GM12878 (cell line): ENCODE measurements at regions of chr7 and their contacts with region 1.

Region 1: DNA sequence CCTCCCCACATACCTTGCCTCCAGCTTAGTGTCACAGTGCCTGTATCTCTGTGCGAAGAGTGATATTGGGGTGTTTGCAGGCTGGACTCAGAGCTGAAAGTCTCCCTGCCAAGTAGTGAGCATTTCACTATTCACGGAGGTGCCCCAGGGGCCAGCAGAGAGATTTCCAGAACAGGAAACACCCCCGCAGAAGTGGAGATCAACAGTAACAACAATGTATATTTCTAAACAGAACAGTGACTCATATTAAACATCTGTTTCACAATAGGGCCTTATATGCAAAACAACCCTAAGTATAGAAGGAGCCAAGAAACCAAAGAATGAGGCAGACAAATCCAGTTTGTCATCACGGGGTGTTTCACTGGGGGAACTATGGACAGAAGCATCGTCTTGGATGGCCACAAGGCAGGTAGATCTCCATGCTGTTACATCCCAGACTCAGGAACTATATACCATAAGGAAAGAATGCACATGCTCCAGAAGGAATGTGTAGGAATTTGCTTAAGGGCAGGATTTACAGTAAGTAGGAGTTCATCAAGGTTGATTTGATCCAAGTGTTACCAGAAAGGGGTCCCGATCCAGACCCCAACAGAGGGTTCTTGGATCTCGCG is 29.3 kb upstream of the CCL24 start:
- DNase-seq: peak; percentile 47
- ATAC-seq: peak; percentile 95
- H3K4me3 ChIP-seq: 0 out of 2 replicates have a peak overlapping the region, but pooled peaks have one; percentile 10
- H3K27ac ChIP-seq: peak overlapping the region; percentile 72
- H3K4me1 ChIP-seq: peaks cover 12% of the 10 kb centered on the region
- H3K27me3 ChIP-seq: no peaks in the 10 kb centered on the region
- CTCF ChIP-seq: no peak
- EP300 ChIP-seq: peak in 1 of 2 experiments; percentile 66; a peak in 2 of 4 replicates
- POLR2A ChIP-seq: 0 out of 2 replicates have a peak, but pooled peaks have one; percentile 40
- RAD21 ChIP-seq: no peak; the same call in 1 of the 2 replicates

Region 2: DNA sequence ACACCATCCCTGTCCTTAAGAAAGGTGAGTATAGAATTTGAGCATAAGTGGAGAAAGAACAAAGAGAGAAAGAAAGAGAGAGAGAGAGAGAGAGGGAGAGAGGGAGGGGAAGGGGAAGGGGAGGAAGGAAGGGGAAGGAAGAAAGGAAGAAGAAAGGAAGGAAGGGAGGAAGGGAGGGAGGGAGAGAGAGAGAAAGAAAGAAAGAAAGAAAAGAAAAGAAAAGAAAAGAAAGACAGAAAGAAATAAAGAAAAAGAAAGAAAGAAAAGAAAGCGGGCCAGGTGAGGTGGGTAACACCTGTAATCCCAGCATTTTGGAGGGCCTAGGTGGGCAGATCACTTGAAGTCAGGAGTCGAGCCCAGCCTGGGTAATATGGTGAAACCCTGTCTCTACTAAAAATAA is 49.3 kb before region 1 on chr7:
- CTCF ChIA-PET with region 1: no interaction called
- POLR2A ChIA-PET with region 1: no interaction called
- RAD21 ChIA-PET with region 1: no interaction called
- SMC1A ChIA-PET with region 1: no interaction called
- in situ Hi-C with region 1: loop called (anchors 5 kb)
- intact Hi-C with region 1: no loop called
- DNase-seq: no peak
- ATAC-seq: no peak
- H3K4me3 ChIP-seq: no peak overlapping the region
- H3K27ac ChIP-seq: no peak overlapping the region
- H3K4me1 ChIP-seq: no peaks in the 10 kb centered on the region
- H3K27me3 ChIP-seq: no peaks in the 10 kb centered on the region
- CTCF ChIP-seq: no peak
- EP300 ChIP-seq: no peak
- POLR2A ChIP-seq: no peak
- RAD21 ChIP-seq: no peak